A549 (cell line): ENCODE measurements at regions of chr2 and their contacts with region 1.

Region 1: DNA sequence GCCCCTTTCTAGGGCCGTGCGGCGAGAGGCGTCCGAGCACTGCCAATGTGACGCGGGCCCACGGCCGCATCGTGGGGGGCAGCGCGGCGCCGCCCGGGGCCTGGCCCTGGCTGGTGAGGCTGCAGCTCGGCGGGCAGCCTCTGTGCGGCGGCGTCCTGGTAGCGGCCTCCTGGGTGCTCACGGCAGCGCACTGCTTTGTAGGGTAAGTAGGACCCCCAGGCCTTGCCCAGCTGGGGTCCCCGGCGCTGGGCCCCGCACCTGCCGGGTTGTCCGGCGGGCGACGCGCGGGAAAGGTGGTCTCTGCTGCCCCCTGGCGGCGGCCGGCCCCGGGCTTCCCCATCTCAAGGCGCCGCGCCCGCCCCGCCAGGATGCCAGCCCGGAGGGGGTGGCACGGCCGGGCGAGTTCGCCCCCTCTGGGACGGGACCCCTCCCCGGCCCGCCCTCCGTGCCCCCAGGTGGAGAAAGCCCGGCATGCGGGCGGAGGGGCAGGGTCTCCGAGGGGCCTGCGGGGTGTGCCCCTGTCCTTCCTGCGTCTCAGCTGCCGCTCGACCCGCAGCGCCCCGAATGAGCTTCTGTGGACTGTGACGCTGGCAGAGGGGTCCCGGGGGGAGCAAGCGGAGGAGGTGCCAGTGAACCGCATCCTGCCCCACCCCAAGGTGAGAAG is 1.9 kb downstream of the PRSS56 start:
- DNase-seq: peak; percentile 42 to 60
- ATAC-seq: peak; percentile 23 to 67; a peak in 3 of 6 replicates
- H3K4me3 ChIP-seq: peak overlapping the region; percentile 40
- H3K27ac ChIP-seq: peak overlapping the region in 1 of 2 experiments; percentile 74; a peak in 3 of 6 replicates
- H3K4me1 ChIP-seq: peaks cover 17% of the 10 kb centered on the region; the same call in 2 of the 3 replicates
- CTCF ChIP-seq: peak; percentile 97
- EP300 ChIP-seq: no peak
- POLR2A ChIP-seq: no peak
- RAD21 ChIP-seq: peak; percentile 77 to 94

Region 2: DNA sequence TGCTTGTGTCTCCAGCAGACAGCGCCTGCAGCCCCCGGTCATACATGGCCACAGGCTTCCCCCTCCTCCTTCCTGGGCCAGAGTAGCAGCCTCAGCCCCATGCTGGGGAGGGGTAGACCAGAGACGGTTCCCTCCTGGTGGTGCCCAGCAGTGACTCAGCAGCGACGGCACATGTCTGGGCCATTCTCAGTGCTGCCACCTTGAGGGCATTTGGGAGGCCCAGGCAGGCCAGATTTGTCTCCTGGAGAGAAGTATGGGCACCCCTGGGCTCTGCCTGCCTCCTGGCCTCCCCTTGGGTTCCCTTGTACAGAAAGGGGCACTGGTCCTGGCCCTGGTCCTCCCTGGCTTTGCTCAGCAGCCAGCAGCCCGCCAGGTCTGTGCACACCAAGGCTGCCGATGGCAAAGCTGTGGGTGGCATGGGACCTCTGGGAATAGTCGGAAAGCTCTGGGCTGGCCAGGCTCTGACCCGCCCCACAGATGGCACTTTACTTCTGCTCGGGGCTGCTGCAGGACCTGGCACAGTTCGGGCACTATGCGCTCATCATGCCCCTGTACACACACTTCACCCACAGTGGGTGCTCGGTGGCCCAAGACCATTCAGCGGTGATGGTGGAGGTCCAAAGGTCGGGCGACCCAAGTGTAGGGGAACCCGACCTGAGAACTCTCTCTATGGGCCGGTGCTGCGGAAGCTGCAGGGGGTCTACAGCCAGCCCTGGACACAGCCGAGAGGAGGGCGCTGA is 77.5 kb before region 1 on chr2:
- CTCF ChIA-PET with region 1: interaction called, 107 read pairs
- POLR2A ChIA-PET with region 1: no interaction called
- DNase-seq: peak; percentile 60 to 85
- ATAC-seq: peak; percentile 41 to 78; a peak in 5 of 6 replicates
- H3K4me3 ChIP-seq: no peak overlapping the region
- H3K27ac ChIP-seq: peak overlapping the region; percentile 80 to 93
- H3K4me1 ChIP-seq: peaks cover 16% of the 10 kb centered on the region
- CTCF ChIP-seq: peak; percentile 62
- EP300 ChIP-seq: no peak
- POLR2A ChIP-seq: no peak
- RAD21 ChIP-seq: 0 out of 5 replicates have a peak, but pooled peaks of 1 of the 2 experiments have one; percentile 11

Region 3: GRCh38 chr2:232463701-232464543 is 58.2 kb before region 1 on chr2:
- CTCF ChIA-PET with region 1: interaction called, 39 read pairs
- POLR2A ChIA-PET with region 1: no interaction called
- DNase-seq: no peak
- ATAC-seq: peak in 1 of 2 experiments; percentile 42; a peak in 1 of 6 replicates
- H3K4me3 ChIP-seq: no peak overlapping the region
- H3K27ac ChIP-seq: no peak overlapping the region
- H3K4me1 ChIP-seq: no peaks in the 10 kb centered on the region
- CTCF ChIP-seq: no peak
- EP300 ChIP-seq: no peak
- POLR2A ChIP-seq: no peak
- RAD21 ChIP-seq: no peak

Region 4: DNA sequence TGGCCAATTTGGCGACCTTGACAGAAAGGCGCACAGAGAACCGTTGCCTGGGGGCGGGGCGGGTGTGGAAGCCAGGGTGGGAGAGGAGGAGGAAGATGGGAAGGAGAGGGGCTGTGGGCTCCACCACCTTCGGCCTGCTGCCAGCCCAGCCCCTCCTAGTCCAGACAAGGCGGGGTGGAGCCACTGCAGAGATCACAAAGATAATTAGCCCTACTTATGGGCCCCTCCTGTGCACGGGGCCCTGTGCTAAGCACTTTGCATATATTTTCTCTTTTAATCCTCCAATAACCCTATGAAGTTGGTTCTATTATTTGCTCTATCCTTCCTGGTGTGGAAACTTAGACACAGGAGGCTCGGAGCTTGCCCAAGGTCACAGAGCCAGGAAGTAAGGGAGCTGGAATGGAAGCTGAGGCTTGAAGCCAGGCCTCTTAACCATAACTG is 20.7 kb before region 1 on chr2:
- CTCF ChIA-PET with region 1: interaction called, 77 read pairs
- POLR2A ChIA-PET with region 1: no interaction called
- DNase-seq: no peak
- ATAC-seq: no peak
- H3K4me3 ChIP-seq: no peak overlapping the region
- H3K27ac ChIP-seq: peak overlapping the region in 1 of 2 experiments; percentile 85; a peak in 3 of 6 replicates
- H3K4me1 ChIP-seq: peaks cover 24% of the 10 kb centered on the region
- CTCF ChIP-seq: no peak
- EP300 ChIP-seq: no peak
- POLR2A ChIP-seq: no peak
- RAD21 ChIP-seq: no peak

Region 5: GRCh38 chr2:232533944-232534710 is 12.0 kb after region 1 on chr2:
- CTCF ChIA-PET with region 1: interaction called, 37 read pairs
- POLR2A ChIA-PET with region 1: no interaction called
- DNase-seq: no peak
- ATAC-seq: peak in 1 of 2 experiments; percentile 7; a peak in 2 of 6 replicates
- H3K4me3 ChIP-seq: no peak overlapping the region
- H3K27ac ChIP-seq: no peak overlapping the region
- H3K4me1 ChIP-seq: no peaks in the 10 kb centered on the region
- CTCF ChIP-seq: no peak
- EP300 ChIP-seq: no peak
- POLR2A ChIP-seq: no peak
- RAD21 ChIP-seq: no peak

Region 6: DNA sequence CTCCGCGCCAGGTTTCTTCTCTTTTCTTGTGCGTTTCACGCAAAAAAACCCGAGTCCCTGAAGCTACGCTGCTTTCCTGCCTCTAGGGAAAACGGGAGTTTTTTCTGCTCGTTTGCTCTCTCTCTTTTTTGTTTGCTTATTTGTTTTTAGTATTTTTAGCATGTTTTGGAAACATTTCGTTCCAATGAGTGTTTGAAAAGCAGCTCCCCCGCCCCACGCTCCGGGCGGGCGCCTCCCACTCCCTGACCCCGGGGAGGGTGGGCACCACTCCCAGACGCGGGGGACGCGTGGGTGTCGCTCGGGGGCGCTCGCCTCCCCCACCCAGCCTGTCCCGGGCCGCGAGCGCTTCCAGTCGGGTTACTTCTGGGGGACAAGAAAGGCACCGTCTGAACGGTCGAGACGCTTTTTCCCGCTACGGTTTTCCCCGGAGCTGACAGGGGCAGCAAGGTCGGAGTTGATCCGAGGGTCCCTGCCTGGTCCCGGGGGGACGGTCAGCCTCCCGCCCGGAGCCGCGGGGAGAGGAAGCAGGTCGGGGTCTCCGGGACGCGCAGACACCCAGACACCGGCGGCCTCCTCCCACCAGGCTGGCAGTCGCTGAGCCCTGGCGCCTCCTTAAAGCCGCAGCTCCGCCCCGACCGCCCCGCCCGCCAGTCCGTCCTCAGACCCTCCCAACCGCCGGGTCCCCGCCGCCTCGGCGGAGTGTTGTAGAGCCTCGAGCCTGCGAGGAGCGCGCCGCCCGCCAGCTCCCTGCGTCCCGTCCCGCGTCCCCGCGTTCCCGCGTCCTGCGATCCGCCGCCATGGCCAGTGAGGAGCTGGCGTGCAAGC is 111.0 kb after region 1 on chr2 and contains the start of gene EFHD1:
- CTCF ChIA-PET with region 1: no interaction called
- POLR2A ChIA-PET with region 1: no interaction called
- DNase-seq: peak; percentile 53 to 73
- ATAC-seq: peak; percentile 88 to 97
- H3K4me3 ChIP-seq: peak within 1 kb of the TSS; percentile 61
- H3K27ac ChIP-seq: peak within 1 kb of the TSS; percentile 53 to 82; a peak in 5 of 6 replicates
- H3K4me1 ChIP-seq: peaks cover 11% of the 10 kb centered on the region; the same call in 2 of the 3 replicates
- CTCF ChIP-seq: no peak
- EP300 ChIP-seq: no peak
- POLR2A ChIP-seq: peak; percentile 20
- RAD21 ChIP-seq: no peak; a peak in 1 of 5 replicates
- polyA plus RNA-seq, gene EFHD1: 2.3 and 2.6 TPM in 2 replicates

Region 7: DNA sequence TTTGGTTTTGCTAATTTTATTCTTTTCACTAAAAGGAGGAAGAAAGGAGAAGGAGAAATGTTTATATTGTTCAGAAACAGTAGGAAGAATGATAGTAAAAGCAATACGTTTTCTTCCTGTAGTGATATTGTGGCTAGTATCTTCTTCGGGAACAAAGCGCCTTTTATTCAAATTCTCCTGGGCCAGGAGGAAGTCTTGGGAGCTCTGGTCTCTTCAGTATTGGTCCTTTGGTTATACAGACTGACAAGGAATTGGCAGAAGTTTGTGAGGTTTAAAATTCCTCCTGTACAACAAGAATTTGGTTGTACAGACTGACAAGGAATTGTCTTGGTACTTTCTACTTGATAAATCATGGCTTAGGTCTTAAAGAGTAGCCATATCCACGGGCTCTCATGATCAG is 185.0 kb after region 1 on chr2:
- CTCF ChIA-PET with region 1: no interaction called
- POLR2A ChIA-PET with region 1: no interaction called
- DNase-seq: no peak
- ATAC-seq: no peak
- H3K4me3 ChIP-seq: no peak overlapping the region
- H3K27ac ChIP-seq: no peak overlapping the region
- H3K4me1 ChIP-seq: no peaks in the 10 kb centered on the region
- CTCF ChIP-seq: no peak
- EP300 ChIP-seq: no peak
- POLR2A ChIP-seq: no peak
- RAD21 ChIP-seq: no peak

Region 8: GRCh38 chr2:233807215-233807865 is 1285.2 kb after region 1 on chr2:
- CTCF ChIA-PET with region 1: no interaction called
- POLR2A ChIA-PET with region 1: no interaction called
- DNase-seq: no peak
- ATAC-seq: no peak
- H3K4me3 ChIP-seq: no peak overlapping the region
- H3K27ac ChIP-seq: peak overlapping the region in 1 of 2 experiments; percentile 56; a peak in 2 of 6 replicates
- H3K4me1 ChIP-seq: peaks cover 1% of the 10 kb centered on the region; the same call in 2 of the 3 replicates
- CTCF ChIP-seq: no peak
- EP300 ChIP-seq: no peak
- POLR2A ChIP-seq: no peak
- RAD21 ChIP-seq: 0 out of 5 replicates have a peak, but pooled peaks of 1 of the 2 experiments have one; percentile 4